Sciatic nerve (tissue), 2 donors: ENCODE measurements at regions of chr19 and their contacts with region 1.

Region 1: DNA sequence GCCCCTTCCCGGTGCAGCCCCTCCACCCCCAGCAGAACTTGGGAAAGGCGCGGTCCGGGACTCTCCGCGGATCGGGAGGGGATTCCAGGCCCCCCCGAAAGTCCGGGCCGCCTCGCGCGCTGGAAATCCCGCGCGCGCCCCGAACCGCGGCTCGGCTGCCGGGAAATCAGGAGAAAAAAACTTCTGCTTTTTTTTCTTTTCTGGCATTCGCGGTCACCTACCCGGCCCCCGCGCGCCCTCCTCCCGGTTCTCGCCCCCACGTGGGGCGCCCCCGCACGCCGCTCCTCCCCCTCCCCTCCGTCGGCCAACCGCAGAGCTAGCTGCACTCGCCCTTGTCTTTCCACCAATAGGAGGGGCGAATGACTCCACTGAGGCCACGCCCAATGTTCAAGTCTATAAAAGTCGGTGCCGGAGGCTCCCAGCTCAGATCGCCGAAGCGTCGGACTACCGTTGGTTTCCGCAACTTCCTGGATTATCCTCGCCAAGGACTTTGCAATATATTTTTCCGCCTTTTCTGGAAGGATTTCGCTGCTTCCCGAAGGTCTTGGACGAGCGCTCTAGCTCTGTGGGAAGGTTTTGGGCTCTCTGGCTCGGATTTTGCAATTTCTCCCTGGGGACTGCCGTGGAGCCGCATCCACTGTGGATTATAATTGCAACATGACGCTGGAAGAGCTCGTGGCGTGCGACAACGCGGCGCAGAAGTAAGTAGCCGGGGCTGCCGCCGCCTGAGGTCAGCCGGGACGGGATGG is at the start of gene GADD45B:
- DNase-seq: peak; percentile 99
- ATAC-seq: peak; percentile 89
- total RNA-seq, gene GADD45B: 136 TPM

Region 2: DNA sequence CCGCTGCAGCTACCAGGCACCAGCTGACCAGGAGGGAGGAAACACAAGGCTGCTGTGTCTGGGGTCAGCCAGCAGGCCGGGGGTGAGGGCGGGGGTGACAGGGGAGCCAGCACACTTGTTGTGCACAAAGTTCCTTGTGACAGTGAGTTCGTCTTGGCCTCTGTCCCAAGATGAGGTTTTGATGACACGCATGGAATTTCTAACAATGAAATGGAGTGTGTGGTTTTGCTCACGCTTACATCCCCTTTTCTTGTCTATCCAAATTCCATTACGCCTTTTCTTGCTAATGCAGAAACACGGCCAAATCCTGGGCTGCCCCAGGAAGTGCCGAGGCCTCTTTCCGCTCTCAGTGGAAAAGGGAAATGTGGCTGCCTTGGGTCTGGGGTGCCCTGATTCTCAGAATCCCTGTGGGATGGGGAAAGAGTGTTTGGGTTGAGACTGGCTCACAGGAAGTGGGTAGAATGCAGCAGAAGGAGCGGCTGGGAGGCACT is 73.9 kb after region 1 on chr19:
- intact Hi-C with region 1: loop called (anchors 5 kb)
- DNase-seq: peak; percentile 92
- ATAC-seq: peak; percentile 90

Region 3: DNA sequence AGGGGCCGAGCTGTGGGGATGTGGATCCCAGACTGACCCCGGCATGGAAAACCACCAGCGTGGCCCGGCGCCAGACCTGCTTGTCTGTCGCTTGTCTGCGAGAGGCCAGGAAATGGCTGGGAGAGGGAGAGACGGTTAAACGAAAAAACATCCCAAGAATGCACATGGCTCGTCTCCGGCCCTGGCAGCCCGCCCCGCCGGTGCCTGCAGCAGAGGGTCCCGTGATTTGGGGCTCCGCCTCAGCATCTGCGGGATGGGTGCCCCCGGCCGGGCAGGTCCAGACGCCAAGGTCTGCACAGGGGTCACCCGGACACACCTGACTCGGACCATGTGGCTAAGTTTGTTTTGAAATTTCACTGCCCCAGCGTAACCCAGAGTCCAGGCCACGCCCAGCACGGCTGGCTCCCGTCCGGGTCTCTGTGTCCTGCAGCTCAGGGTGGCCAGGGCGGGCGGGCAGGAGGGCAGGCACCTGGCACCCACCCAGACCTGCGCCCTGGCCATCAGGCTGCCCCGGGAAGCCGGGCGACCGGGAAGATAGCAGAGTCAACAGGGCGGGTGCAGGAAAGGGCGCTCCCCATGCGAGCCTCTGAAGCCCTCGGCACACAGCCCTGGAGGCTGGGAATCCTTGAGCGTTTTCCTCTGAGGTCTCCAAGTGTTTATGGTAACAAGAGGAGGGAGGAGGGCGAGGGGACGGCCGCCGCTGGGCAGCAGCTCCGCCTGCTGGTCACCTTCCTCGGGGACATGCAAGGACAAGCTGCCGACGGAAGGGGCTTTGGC is 103.2 kb after region 1 on chr19:
- intact Hi-C with region 1: loop called (anchors 2 kb)
- DNase-seq: peak; percentile 93
- ATAC-seq: peak; percentile 84

Region 4: GRCh38 chr19:2610637-2611482 is 135.0 kb after region 1 on chr19:
- intact Hi-C with region 1: loop called (anchors 5 kb)
- DNase-seq: peak; percentile 97
- ATAC-seq: peak; percentile 94